ENCODE measurements at regions of chr18 and their contacts with region 1.

Region 1: GRCh38 chr18:250688-251422 is 17.0 kb downstream of the THOC1 start:
- H3K4me3 Mint-ChIP-seq: no peak overlapping the region
- H3K27ac Mint-ChIP-seq: no peak overlapping the region
- H3K4me1 Mint-ChIP-seq: no peaks in the 10 kb centered on the region
- H3K27me3 Mint-ChIP-seq: no peaks in the 10 kb centered on the region

Region 2: DNA sequence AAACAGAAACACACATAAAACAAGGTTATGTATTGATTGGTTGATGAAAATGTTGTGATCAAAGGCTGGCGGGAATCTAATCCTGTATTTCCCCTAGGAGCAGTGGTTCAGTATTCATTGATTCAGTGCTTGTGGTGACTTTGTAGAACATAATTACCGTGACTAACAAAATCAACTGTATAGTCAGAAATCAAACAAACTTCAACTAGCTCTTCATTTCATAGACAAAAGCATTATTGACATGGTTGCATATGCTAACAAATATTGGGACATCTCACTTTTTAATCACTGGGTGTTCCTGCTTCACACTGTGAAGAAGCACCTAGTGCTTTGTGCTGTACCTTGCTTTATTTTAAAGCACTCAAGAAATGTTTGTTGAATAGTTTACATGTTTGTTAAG is 51.1 kb before region 1 on chr18:
- intact Hi-C with region 1: loop called (anchors 10 kb)
- H3K4me3 Mint-ChIP-seq: no peak overlapping the region
- H3K27ac Mint-ChIP-seq: no peak overlapping the region
- H3K4me1 Mint-ChIP-seq: no peaks in the 10 kb centered on the region
- H3K27me3 Mint-ChIP-seq: no peaks in the 10 kb centered on the region

Region 3: DNA sequence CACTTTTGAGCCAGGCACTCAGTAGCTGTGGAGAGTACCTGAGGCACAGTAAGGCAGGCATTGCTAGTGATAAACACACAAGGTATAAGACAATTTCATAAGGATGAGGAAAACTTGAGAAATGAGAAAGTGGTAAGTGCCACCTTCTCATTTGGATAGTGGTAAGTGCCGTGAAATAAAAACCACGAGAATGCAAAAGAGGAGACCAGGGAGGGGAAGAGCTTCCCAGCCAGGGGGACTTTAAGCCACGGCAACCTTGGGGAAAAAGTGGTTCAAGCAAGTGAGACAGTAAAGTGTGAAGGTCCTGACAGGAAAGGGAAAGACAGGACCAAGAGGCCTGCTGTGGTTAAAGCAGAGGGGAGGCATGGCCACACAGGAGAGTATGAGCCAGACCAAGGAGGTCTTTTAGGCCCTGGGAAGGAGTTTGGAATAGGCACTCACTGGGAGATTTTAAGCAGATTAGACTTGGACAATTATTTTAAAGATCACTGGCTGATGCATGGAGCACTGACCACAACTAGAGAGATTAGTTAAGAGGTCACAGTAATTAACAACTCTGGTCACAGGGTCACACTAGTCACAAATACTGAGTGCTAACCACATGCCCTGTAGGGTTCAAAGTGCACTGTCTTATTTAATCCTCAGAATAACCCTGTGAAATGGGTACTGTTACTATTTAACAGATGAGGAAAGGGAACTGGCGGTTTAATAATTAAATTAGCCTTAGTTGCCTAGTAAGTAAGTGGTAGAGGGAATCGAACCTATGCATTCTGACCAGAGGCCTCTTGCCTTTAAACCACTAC is 33.1 kb before region 1 on chr18:
- intact Hi-C with region 1: no loop called
- H3K4me3 Mint-ChIP-seq: no peak overlapping the region
- H3K27ac Mint-ChIP-seq: peak overlapping the region; percentile 4
- H3K4me1 Mint-ChIP-seq: no peaks in the 10 kb centered on the region
- H3K27me3 Mint-ChIP-seq: no peaks in the 10 kb centered on the region

Region 4: DNA sequence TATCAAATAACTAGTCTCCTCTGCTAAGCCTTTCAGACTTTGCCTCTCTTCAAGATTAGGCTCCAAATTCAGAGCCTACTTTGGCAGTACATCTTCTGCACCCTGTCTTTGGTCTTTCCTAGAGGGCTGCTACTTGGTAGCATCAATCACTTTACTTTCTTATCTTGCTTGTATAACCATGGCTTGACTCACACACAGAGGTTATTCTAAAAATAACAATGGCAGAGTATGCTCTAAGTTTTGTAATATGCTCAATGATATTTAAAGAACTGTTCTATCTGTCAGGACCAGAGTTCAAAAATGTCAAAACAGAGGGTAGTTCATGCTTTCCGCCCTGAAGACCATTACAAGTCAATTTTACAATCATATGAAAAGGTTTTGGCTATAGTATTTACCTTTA is 10.7 kb before region 1 on chr18:
- intact Hi-C with region 1: no loop called
- H3K4me3 Mint-ChIP-seq: no peak overlapping the region
- H3K27ac Mint-ChIP-seq: no peak overlapping the region
- H3K4me1 Mint-ChIP-seq: no peaks in the 10 kb centered on the region
- H3K27me3 Mint-ChIP-seq: no peaks in the 10 kb centered on the region

Region 5: GRCh38 chr18:323253-323622 is 72.4 kb after region 1 on chr18:
- intact Hi-C with region 1: no loop called
- H3K4me3 Mint-ChIP-seq: no peak overlapping the region
- H3K27ac Mint-ChIP-seq: peak overlapping the region; percentile 73
- H3K4me1 Mint-ChIP-seq: peaks cover 16% of the 10 kb centered on the region
- H3K27me3 Mint-ChIP-seq: no peaks in the 10 kb centered on the region

Region 6: GRCh38 chr18:427005-427404 is 176.2 kb after region 1 on chr18:
- intact Hi-C with region 1: no loop called
- H3K4me3 Mint-ChIP-seq: no peak overlapping the region
- H3K27ac Mint-ChIP-seq: no peak overlapping the region
- H3K4me1 Mint-ChIP-seq: peaks cover 5% of the 10 kb centered on the region
- H3K27me3 Mint-ChIP-seq: no peaks in the 10 kb centered on the region